ENCODE measurements at regions of chr3 and their contacts with region 1.

Region 1: DNA sequence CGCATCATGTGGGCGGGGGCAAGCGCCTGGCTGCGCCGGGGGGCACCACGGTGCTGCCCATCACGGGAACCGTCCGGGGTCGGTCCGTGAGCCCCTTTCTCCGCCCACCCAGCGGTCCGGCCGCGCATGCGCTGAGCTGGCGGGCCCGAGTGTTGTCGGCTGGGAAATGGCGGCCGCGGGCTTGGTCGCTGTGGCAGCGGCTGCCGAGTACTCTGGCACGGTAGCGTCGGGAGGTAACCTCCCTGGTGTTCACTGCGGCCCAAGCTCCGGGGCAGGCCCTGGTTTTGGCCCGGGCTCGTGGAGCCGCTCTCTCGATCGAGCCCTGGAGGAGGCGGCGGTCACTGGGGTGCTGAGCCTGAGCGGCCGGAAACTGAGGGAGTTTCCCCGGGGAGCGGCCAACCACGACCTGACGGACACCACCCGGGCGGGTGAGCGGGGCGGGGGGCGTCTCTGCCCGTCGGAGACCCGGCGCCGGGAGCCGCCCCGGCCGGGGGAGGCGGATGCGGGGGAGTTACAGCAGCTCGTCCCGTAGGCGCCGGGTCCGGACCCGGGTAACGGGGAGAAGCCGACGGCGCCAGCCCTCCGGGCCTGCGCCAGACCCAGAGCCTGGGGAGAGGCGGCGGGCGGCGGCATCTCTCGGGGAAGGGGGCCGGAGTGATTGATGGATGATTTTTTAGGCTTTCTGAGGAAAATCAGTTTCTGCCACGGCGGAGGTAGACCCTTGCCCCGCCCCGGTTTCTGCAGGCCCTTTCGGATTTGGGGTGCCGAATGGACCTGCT is at the start of gene LRCH3:
- DNase-seq: peak; percentile 67 to 92 (median 83)
- ATAC-seq: peak; percentile 65
- H3K4me3 ChIP-seq: peak within 1 kb of the TSS; percentile 88
- H3K4me3 Mint-ChIP-seq: peak within 1 kb of the TSS; percentile 91
- H3K27ac ChIP-seq: peak within 1 kb of the TSS; percentile 93 to 96
- H3K27ac Mint-ChIP-seq: peak within 1 kb of the TSS; percentile 97
- H3K4me1 ChIP-seq: peaks cover 17% of the 10 kb centered on the region
- H3K4me1 Mint-ChIP-seq: peaks cover 36% of the 10 kb centered on the region
- H3K27me3 ChIP-seq: no peaks in the 10 kb centered on the region
- H3K27me3 Mint-ChIP-seq: no peaks in the 10 kb centered on the region
- CTCF ChIP-seq: no peak
- total RNA-seq, gene LRCH3: 37.1 to 39.7 TPM

Region 2: GRCh38 chr3:197711973-197712707 is 79.2 kb before region 1 on chr3:
- CTCF ChIA-PET with region 1: interaction called, 3 read pairs
- POLR2A ChIA-PET with region 1: interaction called, 6 read pairs
- intact Hi-C with region 1: loop called in 1 of 2 experiments (anchors 5 kb)
- DNase-seq: peak; percentile 71 to 98 (median 86)
- ATAC-seq: peak; percentile 98
- H3K4me3 ChIP-seq: peak overlapping the region; percentile 29 to 41
- H3K4me3 Mint-ChIP-seq: peak overlapping the region; percentile 75
- H3K27ac ChIP-seq: peak overlapping the region; percentile 59 to 90
- H3K27ac Mint-ChIP-seq: peak overlapping the region; percentile 94
- H3K4me1 ChIP-seq: peaks cover 14% of the 10 kb centered on the region
- H3K4me1 Mint-ChIP-seq: peaks cover 24% of the 10 kb centered on the region
- H3K27me3 ChIP-seq: no peaks in the 10 kb centered on the region
- H3K27me3 Mint-ChIP-seq: no peaks in the 10 kb centered on the region
- CTCF ChIP-seq: no peak

Region 3: DNA sequence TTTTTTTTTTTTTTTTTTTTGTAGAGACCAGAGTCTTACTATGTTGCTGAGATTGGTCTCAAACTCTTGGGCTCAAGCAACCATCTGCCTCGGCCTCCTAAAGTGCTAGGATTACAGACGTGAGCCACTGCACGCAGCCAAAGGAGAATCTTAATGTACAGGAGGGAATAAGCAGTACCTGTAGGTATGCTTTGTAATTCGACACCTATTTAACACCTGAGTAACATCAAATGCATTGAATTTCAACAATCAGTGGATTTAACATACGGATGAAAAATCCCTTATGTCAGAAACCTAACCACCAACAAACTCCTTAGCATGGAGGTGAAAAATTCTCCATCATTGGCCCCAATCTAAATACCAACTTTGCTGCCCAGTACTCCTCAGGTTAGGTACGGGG is 65.8 kb before region 1 on chr3:
- CTCF ChIA-PET with region 1: no interaction called
- POLR2A ChIA-PET with region 1: no interaction called
- intact Hi-C with region 1: no loop called
- DNase-seq: no peak
- ATAC-seq: no peak
- H3K4me3 ChIP-seq: no peak overlapping the region
- H3K4me3 Mint-ChIP-seq: no peak overlapping the region
- H3K27ac ChIP-seq: no peak overlapping the region
- H3K27ac Mint-ChIP-seq: no peak overlapping the region
- H3K4me1 ChIP-seq: peaks cover 4% of the 10 kb centered on the region
- H3K4me1 Mint-ChIP-seq: peaks cover 18% of the 10 kb centered on the region
- H3K27me3 ChIP-seq: no peaks in the 10 kb centered on the region
- H3K27me3 Mint-ChIP-seq: no peaks in the 10 kb centered on the region
- CTCF ChIP-seq: no peak

Region 4: GRCh38 chr3:197736491-197737318 is 54.6 kb before region 1 on chr3 and contains the start of gene RUBCN:
- CTCF ChIA-PET with region 1: no interaction called
- POLR2A ChIA-PET with region 1: no interaction called
- intact Hi-C with region 1: loop called in 1 of 2 experiments (anchors 1 kb)
- DNase-seq: peak; percentile 81 to 97 (median 92)
- ATAC-seq: peak; percentile 96
- H3K4me3 ChIP-seq: peak within 1 kb of the TSS; percentile 58 to 90
- H3K4me3 Mint-ChIP-seq: peak within 1 kb of the TSS; percentile 89
- H3K27ac ChIP-seq: peak within 1 kb of the TSS; percentile 73 to 74
- H3K27ac Mint-ChIP-seq: peak within 1 kb of the TSS; percentile 91
- H3K4me1 ChIP-seq: peaks cover 18% of the 10 kb centered on the region
- H3K4me1 Mint-ChIP-seq: peaks cover 37% of the 10 kb centered on the region
- H3K27me3 ChIP-seq: no peaks in the 10 kb centered on the region
- H3K27me3 Mint-ChIP-seq: no peaks in the 10 kb centered on the region
- CTCF ChIP-seq: no peak
- total RNA-seq, gene RUBCN: 32.6 to 33.6 TPM

Region 5: GRCh38 chr3:197749601-197750395 is 41.5 kb before region 1 on chr3 and contains the start of gene FYTTD1:
- CTCF ChIA-PET with region 1: interaction called, 4 read pairs
- POLR2A ChIA-PET with region 1: interaction called, 4 read pairs
- intact Hi-C with region 1: loop called (anchors 1 kb)
- DNase-seq: peak; percentile 72 to 95 (median 89)
- ATAC-seq: peak; percentile 76
- H3K4me3 ChIP-seq: peak within 1 kb of the TSS; percentile 57 to 73
- H3K4me3 Mint-ChIP-seq: peak within 1 kb of the TSS; percentile 96
- H3K27ac ChIP-seq: peak within 1 kb of the TSS; percentile 64 to 79
- H3K27ac Mint-ChIP-seq: peak within 1 kb of the TSS; percentile 98
- H3K4me1 ChIP-seq: peaks cover 33% of the 10 kb centered on the region
- H3K4me1 Mint-ChIP-seq: peaks cover 46% of the 10 kb centered on the region
- H3K27me3 ChIP-seq: no peaks in the 10 kb centered on the region
- H3K27me3 Mint-ChIP-seq: no peaks in the 10 kb centered on the region
- CTCF ChIP-seq: peak; percentile 15
- total RNA-seq, gene FYTTD1: 80.9 to 88.0 TPM

Region 6: GRCh38 chr3:197801891-197802778 is 10.8 kb after region 1 on chr3:
- CTCF ChIA-PET with region 1: interaction called, 3 read pairs
- POLR2A ChIA-PET with region 1: interaction called, 7 read pairs
- intact Hi-C with region 1: loop called in 1 of 2 experiments (anchors 1 kb)
- DNase-seq: peak in 5 of 9 experiments; percentile 24 to 65 (median 32)
- ATAC-seq: peak; percentile 70
- H3K4me3 ChIP-seq: no peak overlapping the region
- H3K4me3 Mint-ChIP-seq: peak overlapping the region; percentile 13
- H3K27ac ChIP-seq: peak overlapping the region in 1 of 2 experiments; percentile 27
- H3K27ac Mint-ChIP-seq: peak overlapping the region; percentile 74
- H3K4me1 ChIP-seq: peaks cover 22% of the 10 kb centered on the region
- H3K4me1 Mint-ChIP-seq: peaks cover 50% of the 10 kb centered on the region
- H3K27me3 ChIP-seq: no peaks in the 10 kb centered on the region
- H3K27me3 Mint-ChIP-seq: no peaks in the 10 kb centered on the region
- CTCF ChIP-seq: peak; percentile 71

Region 7: DNA sequence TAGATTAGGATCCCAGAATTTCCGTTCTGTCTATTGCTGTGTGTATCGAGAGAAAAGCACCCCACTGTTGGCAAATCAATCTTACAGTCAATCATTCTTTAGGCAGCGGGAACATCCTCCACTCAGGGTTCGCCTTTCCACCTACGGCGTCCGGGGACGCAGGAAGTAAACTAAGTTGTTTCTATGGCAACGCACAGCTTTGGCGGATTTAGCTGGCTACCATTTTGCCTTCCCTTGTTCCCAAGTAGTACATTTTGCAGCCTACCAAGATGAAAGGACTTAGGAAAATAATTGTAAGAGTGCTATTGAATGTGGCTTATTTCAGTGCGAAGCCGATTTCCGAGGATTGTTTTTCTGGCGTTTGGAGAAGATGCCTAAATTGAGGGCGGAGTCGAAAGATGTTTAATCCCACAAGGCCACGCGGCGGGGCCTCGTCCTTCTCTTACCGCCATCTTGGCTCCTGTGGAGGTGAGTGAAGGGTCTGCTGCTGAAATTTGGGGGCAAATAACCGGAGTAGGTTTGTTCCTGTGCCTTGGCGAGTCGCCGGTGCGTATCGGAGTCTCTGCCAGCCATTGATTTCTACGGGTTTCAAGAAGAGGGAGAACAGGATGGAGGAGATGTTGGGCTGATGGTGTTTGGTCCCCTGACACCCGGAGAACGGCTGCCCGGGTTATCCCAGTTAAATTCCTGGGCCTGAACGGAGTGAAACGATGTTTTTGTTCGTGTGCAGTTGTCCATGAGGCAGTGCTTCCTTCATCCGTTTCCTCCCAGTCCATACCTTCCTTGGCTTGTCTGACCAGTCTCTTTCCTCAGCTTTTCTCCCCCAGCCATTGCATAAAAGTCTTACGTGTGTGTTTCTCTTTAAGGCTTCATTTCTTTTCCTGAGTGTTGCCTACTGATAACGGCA is 158.7 kb after region 1 on chr3 and contains the start of gene RPL35A:
- CTCF ChIA-PET with region 1: no interaction called
- POLR2A ChIA-PET with region 1: no interaction called
- intact Hi-C with region 1: loop called (anchors 2 to 10 kb)
- DNase-seq: peak; percentile 74 to 96 (median 81)
- ATAC-seq: peak; percentile 91
- H3K4me3 ChIP-seq: peak within 1 kb of the TSS; percentile 59 to 85
- H3K4me3 Mint-ChIP-seq: peak within 1 kb of the TSS; percentile 98
- H3K27ac ChIP-seq: peak within 1 kb of the TSS; percentile 91 to 97
- H3K27ac Mint-ChIP-seq: peak within 1 kb of the TSS; percentile 98
- H3K4me1 ChIP-seq: peaks cover 39% of the 10 kb centered on the region
- H3K4me1 Mint-ChIP-seq: peaks cover 43% of the 10 kb centered on the region
- H3K27me3 ChIP-seq: no peaks in the 10 kb centered on the region
- H3K27me3 Mint-ChIP-seq: no peaks in the 10 kb centered on the region
- CTCF ChIP-seq: no peak
- total RNA-seq, gene RPL35A: 2,004 to 2,100 TPM

Region 8: GRCh38 chr3:197959898-197960693 is 168.8 kb after region 1 on chr3 and contains the start of gene LMLN:
- CTCF ChIA-PET with region 1: no interaction called
- POLR2A ChIA-PET with region 1: no interaction called
- intact Hi-C with region 1: loop called in 1 of 2 experiments (anchors 5 kb)
- DNase-seq: peak; percentile 87 to 98 (median 95)
- ATAC-seq: peak; percentile 91
- H3K4me3 ChIP-seq: peak within 1 kb of the TSS; percentile 89 to 90
- H3K4me3 Mint-ChIP-seq: peak within 1 kb of the TSS; percentile 91
- H3K27ac ChIP-seq: peak within 1 kb of the TSS; percentile 82 to 88
- H3K27ac Mint-ChIP-seq: peak within 1 kb of the TSS; percentile 92
- H3K4me1 ChIP-seq: peaks cover 32% of the 10 kb centered on the region
- H3K4me1 Mint-ChIP-seq: peaks cover 55% of the 10 kb centered on the region
- H3K27me3 ChIP-seq: no peaks in the 10 kb centered on the region
- H3K27me3 Mint-ChIP-seq: no peaks in the 10 kb centered on the region
- CTCF ChIP-seq: no peak
- total RNA-seq, gene LMLN: 4.4 to 6.4 TPM